Activated B cell treated with CpG ODN at 0.5 μM for 24 hours (primary cell): ENCODE measurements at regions of chr18 and their contacts with region 1.

Region 1: DNA sequence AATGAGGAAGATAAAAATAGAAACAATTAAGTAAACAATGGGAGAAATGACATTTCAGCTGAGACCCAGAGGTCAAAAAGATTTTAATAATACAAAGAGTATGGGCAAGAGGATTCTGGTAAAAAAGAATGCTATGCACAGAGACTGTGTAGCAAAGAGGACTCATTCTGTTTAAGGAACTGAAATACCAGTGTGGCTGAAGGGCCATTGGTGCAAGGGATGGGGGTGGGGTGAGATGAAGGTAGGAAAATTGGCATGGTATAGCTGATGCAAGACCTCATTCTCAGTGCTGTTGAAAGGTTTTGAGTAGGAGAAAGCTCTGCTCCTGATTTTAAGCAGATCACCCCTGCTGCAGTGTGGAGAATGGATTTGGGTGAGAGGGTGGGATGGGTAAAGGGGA is 10.8 kb downstream of the GALNT1 start:
- DNase-seq: peak; percentile 52
- ATAC-seq: peak; percentile 96
- H3K4me3 Mint-ChIP-seq: no peak overlapping the region
- H3K27ac Mint-ChIP-seq: no peak overlapping the region
- H3K4me1 Mint-ChIP-seq: peaks cover 49% of the 10 kb centered on the region
- H3K27me3 Mint-ChIP-seq: no peaks in the 10 kb centered on the region
- CTCF ChIP-seq: no peak

Region 2: DNA sequence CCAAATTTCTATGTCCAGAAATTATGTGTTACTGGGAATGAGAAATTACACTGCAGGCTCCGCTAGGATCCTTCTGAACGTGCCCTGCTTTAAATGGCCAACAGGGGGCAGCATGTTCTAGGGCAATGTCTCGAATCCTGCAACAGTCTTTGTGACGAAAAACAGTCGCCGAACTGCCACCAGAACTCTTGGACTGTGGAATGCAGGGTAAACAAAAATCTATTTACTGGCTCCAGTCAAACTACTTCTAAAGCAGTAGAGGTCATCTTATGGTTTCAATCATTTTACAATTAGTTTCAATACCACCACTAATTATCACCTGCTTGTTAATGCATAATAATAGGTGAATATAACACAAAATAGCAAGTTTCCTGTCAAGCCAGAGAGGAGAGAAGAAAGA is 361.2 kb before region 1 on chr18:
- CTCF ChIA-PET with region 1: no interaction called
- POLR2A ChIA-PET with region 1: no interaction called
- intact Hi-C with region 1: loop called (anchors 5 kb)
- DNase-seq: peak; percentile 49
- ATAC-seq: peak; percentile 97
- H3K4me3 Mint-ChIP-seq: peak overlapping the region; percentile 36
- H3K27ac Mint-ChIP-seq: no peak overlapping the region
- H3K4me1 Mint-ChIP-seq: peaks cover 3% of the 10 kb centered on the region
- H3K27me3 Mint-ChIP-seq: no peaks in the 10 kb centered on the region
- CTCF ChIP-seq: peak; percentile 75

Region 3: GRCh38 chr18:35459005-35459441 is 133.3 kb before region 1 on chr18:
- CTCF ChIA-PET with region 1: no interaction called
- POLR2A ChIA-PET with region 1: no interaction called
- intact Hi-C with region 1: no loop called
- DNase-seq: no peak
- ATAC-seq: no peak
- H3K4me3 Mint-ChIP-seq: no peak overlapping the region
- H3K27ac Mint-ChIP-seq: no peak overlapping the region
- H3K4me1 Mint-ChIP-seq: no peaks in the 10 kb centered on the region
- H3K27me3 Mint-ChIP-seq: no peaks in the 10 kb centered on the region
- CTCF ChIP-seq: no peak

Region 4: GRCh38 chr18:35602193-35602820 is 10.0 kb after region 1 on chr18:
- CTCF ChIA-PET with region 1: no interaction called
- POLR2A ChIA-PET with region 1: interaction called, 15 read pairs
- intact Hi-C with region 1: loop called (anchors 1 kb)
- DNase-seq: no peak
- ATAC-seq: no peak
- H3K4me3 Mint-ChIP-seq: no peak overlapping the region
- H3K27ac Mint-ChIP-seq: no peak overlapping the region
- H3K4me1 Mint-ChIP-seq: peaks cover 46% of the 10 kb centered on the region
- H3K27me3 Mint-ChIP-seq: no peaks in the 10 kb centered on the region
- CTCF ChIP-seq: no peak

Region 5: DNA sequence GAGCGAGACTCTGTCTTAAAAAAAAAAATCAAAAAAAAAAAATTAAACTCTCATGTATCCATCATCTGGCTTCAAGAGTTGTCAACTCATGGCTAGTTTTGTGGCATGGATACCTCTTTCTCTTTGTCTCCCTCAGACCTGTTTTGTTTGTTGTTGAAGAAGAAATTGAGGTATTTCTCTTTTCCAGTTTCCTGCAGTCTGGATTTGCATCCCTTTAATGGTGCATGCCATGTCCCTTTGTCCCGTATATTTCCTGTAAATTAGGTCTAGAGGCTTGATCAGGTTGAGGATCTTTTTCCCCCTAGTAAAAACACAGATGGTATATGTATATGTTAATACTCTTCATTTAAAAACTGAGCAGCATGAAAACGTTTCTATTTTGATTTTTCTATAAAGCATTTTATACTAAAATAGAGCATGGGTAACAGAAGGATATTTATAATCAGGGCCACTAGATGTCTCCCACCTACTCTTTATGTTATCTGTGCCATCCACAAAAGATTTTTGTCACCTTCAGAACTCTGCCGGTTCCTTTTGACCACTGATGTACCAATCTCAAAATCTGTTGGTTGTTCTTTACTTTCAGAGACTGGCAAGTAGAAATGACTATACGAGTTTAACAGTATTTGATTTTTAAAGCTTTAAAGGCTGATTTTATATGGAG is 69.3 kb after region 1 on chr18:
- CTCF ChIA-PET with region 1: interaction called, 4 read pairs
- POLR2A ChIA-PET with region 1: no interaction called
- intact Hi-C with region 1: loop called (anchors 2 kb)
- DNase-seq: no peak
- ATAC-seq: no peak
- H3K4me3 Mint-ChIP-seq: no peak overlapping the region
- H3K27ac Mint-ChIP-seq: no peak overlapping the region
- H3K4me1 Mint-ChIP-seq: peaks cover 19% of the 10 kb centered on the region
- H3K27me3 Mint-ChIP-seq: no peaks in the 10 kb centered on the region
- CTCF ChIP-seq: no peak

Region 6: DNA sequence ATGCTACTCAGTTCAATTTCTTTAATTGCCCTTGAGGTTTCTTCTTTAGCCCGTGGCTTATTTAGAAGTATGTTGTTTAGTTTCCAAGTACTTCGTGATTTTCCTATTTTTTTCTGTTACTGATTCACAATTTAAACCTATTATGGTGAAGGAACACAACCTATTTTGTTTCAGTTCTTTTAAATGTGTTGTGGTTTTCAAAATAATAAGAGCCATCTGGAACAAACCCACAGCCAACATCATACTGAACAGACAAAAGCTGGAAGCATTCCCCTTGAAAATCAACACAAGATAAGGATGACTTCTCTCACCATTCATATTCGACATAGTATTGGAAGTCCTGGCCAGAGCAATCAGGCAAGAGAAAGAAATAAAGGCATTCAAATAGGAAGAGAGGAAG is 144.4 kb after region 1 on chr18:
- CTCF ChIA-PET with region 1: no interaction called
- POLR2A ChIA-PET with region 1: no interaction called
- intact Hi-C with region 1: no loop called
- DNase-seq: no peak
- ATAC-seq: no peak
- H3K4me3 Mint-ChIP-seq: no peak overlapping the region
- H3K27ac Mint-ChIP-seq: no peak overlapping the region
- H3K4me1 Mint-ChIP-seq: no peaks in the 10 kb centered on the region
- H3K27me3 Mint-ChIP-seq: no peaks in the 10 kb centered on the region
- CTCF ChIP-seq: no peak

Region 7: GRCh38 chr18:35770376-35771014 is 178.2 kb after region 1 on chr18:
- CTCF ChIA-PET with region 1: no interaction called
- POLR2A ChIA-PET with region 1: no interaction called
- intact Hi-C with region 1: no loop called
- DNase-seq: no peak
- ATAC-seq: peak; percentile 57
- H3K4me3 Mint-ChIP-seq: no peak overlapping the region
- H3K27ac Mint-ChIP-seq: no peak overlapping the region
- H3K4me1 Mint-ChIP-seq: peaks cover 7% of the 10 kb centered on the region
- H3K27me3 Mint-ChIP-seq: peaks cover 10% of the 10 kb centered on the region
- CTCF ChIP-seq: no peak

Region 8: DNA sequence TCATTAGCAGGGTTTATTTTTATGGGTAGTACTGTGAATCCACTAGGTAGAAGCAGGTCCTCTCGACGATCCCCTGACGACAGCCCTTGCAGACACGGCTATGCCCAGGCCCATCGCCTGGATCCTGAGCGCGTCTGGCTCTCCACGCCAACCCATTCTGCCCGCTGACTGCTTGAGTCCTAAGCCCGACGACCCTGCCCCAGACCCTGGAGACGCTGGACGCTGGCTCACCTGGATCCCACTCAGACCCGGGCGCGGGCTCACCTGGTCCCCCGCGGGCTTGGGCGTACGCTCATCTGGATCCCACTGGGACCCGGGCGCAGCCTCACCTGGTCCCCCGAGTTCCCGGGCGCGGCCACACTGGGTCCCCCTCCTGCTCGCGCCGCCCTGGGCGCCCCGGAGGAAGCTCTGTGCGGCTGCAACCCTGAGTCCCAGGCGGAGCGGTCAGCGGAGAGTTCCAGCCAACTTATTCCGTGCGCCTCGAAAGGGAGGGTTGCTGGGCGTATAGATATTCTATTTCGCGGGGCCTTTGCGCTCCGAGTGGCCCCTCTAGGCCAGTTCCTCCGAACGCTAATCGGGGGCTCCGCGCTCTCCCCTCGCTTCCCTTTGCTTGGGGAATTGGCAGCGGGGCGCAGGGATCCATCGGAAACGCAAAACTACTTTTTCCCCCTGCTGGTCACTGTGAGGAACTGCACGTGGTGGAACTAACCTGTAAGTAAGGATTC is 357.8 kb after region 1 on chr18:
- CTCF ChIA-PET with region 1: interaction called, 9 read pairs
- POLR2A ChIA-PET with region 1: no interaction called
- intact Hi-C with region 1: loop called (anchors 1 kb)
- DNase-seq: peak; percentile 43
- ATAC-seq: peak; percentile 85
- H3K4me3 Mint-ChIP-seq: peak overlapping the region; percentile 82
- H3K27ac Mint-ChIP-seq: no peak overlapping the region
- H3K4me1 Mint-ChIP-seq: peaks cover 8% of the 10 kb centered on the region
- H3K27me3 Mint-ChIP-seq: peaks cover 27% of the 10 kb centered on the region
- CTCF ChIP-seq: peak; percentile 98

Region 9: GRCh38 chr18:36284671-36285295 is 692.5 kb after region 1 on chr18:
- CTCF ChIA-PET with region 1: no interaction called
- POLR2A ChIA-PET with region 1: no interaction called
- intact Hi-C with region 1: loop called (anchors 1 kb)
- DNase-seq: no peak
- ATAC-seq: peak; percentile 64
- H3K4me3 Mint-ChIP-seq: no peak overlapping the region
- H3K27ac Mint-ChIP-seq: no peak overlapping the region
- H3K4me1 Mint-ChIP-seq: peaks cover 2% of the 10 kb centered on the region
- H3K27me3 Mint-ChIP-seq: peaks cover 38% of the 10 kb centered on the region
- CTCF ChIP-seq: peak; percentile 72

Region 10: GRCh38 chr18:36942264-36942663 is 1350.0 kb after region 1 on chr18:
- CTCF ChIA-PET with region 1: no interaction called
- POLR2A ChIA-PET with region 1: no interaction called
- intact Hi-C with region 1: no loop called
- DNase-seq: no peak
- ATAC-seq: no peak
- H3K4me3 Mint-ChIP-seq: no peak overlapping the region
- H3K27ac Mint-ChIP-seq: no peak overlapping the region
- H3K4me1 Mint-ChIP-seq: no peaks in the 10 kb centered on the region
- H3K27me3 Mint-ChIP-seq: no peaks in the 10 kb centered on the region
- CTCF ChIP-seq: no peak